GM12878 (cell line): ENCODE measurements at regions of chr2 and their contacts with region 1.

Region 1: DNA sequence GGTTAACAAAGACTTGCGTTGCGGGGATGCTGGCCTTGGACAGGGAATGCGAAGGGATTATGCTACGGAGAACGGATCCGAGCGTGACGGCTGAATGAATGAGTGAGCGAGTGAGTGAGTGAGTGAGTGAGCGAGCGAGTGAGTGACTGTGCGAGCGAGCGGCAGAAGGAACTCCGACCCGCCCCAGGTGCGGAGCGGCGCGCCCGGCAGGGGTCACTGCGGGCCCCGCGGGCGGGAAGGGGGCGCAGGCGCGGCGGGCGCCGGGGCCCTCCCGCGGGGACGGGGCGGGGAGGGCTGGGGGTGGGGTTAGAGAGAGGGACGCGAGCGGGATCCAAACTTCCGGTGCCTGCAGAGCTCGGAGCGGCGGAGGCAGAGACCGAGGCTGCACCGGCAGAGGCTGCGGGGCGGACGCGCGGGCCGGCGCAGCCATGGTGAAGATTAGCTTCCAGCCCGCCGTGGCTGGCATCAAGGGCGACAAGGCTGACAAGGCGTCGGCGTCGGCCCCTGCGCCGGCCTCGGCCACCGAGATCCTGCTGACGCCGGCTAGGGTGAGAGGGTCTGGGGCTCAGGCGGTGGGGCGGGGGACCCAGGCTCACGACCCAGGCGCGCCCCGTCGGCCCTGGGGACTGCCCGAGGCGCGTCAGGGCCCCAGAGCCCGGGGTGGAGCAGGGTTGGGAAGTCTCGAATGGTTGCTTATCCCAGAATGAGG is at the start of gene ITM2C:
- DNase-seq: no peak
- ATAC-seq: peak; percentile 84
- H3K4me3 ChIP-seq: peak within 1 kb of the TSS; percentile 97
- H3K27ac ChIP-seq: peak within 1 kb of the TSS; percentile 38
- H3K4me1 ChIP-seq: peaks cover 18% of the 10 kb centered on the region
- H3K27me3 ChIP-seq: no peaks in the 10 kb centered on the region; a peak in 2 of 4 replicates
- CTCF ChIP-seq: peak; percentile 50 to 52 (median 52); a peak in 5 of 6 replicates
- EP300 ChIP-seq: no peak
- POLR2A ChIP-seq: peak; percentile 87
- RAD21 ChIP-seq: peak; percentile 48
- polyA plus RNA-seq, gene ITM2C: 5.4 to 16.9 TPM

Region 2: GRCh38 chr2:230893841-230894781 is 29.4 kb after region 1 on chr2:
- CTCF ChIA-PET with region 1: interaction called, 5 read pairs
- POLR2A ChIA-PET with region 1: interaction called, 3 read pairs
- RAD21 ChIA-PET with region 1: interaction called, 9 read pairs
- SMC1A ChIA-PET with region 1: interaction called, 4 read pairs
- in situ Hi-C with region 1: no loop called
- intact Hi-C with region 1: loop called (anchors 2 kb)
- DNase-seq: no peak
- ATAC-seq: peak; percentile 71
- H3K4me3 ChIP-seq: no peak overlapping the region
- H3K27ac ChIP-seq: 0 out of 2 replicates have a peak overlapping the region, but pooled peaks have one; percentile 7
- H3K4me1 ChIP-seq: peaks cover 39% of the 10 kb centered on the region
- H3K27me3 ChIP-seq: no peaks in the 10 kb centered on the region
- CTCF ChIP-seq: no peak
- EP300 ChIP-seq: no peak; a peak in 1 of 4 replicates
- POLR2A ChIP-seq: no peak
- RAD21 ChIP-seq: no peak